Activated CD8-positive, alpha-beta T cell treated with anti-CD3 and anti-CD28 coated beads, Interleukin-2, amount 10 ng/mL, durations not matched to agents 7 days and 5 days (primary cell): ENCODE measurements at regions of chr15 and their contacts with region 1.

Region 1: DNA sequence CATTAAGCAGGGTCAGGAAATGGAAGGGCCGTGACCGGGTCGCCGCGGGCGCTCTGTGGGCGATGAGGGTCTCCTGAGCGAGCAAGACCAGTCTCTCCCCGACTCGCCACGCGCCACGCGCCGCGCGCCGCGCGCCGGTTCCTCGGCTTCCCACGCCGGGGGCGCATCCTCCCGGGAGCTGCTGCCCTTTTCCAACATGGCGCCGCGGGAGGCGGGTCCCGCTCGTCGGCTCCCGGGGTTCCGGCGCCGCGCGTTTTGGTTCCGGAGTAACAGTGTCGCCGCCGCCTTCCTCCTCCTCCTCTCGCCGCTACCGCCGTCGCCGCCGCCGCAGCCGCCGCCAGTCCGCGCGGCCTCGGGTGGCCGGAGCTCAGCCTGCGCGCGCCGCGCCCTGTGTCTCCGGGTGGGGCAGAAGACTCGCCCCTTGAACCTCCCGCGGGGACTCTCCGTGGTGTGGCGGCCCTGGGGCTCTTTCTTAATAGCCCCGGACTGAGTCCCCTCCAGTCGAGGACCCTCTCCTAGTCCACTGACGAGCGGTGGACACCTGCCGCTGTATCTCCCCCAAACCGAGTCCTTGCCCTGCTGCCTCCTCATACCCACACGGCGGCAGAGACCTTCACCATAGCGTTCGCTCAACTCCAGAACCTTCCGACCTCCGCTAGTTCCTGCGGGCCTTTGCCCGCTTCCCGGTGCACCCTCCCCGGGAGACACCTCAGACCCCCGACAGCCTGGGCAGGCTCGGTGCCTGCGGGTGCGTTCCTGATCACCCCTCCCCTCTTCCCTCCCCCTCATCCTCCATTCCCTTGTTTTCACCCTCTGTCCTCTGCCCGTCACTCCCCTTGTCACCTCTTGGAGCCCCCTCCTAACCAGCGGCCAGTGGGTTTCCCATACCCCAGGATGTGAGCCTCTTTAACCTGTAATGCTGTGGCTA is at the start of gene MAP2K5:
- DNase-seq: peak; percentile 84
- ATAC-seq: peak; percentile 84
- H3K4me3 Mint-ChIP-seq: peak within 1 kb of the TSS; percentile 94
- H3K27ac Mint-ChIP-seq: peak within 1 kb of the TSS; percentile 98
- H3K4me1 Mint-ChIP-seq: peaks cover 55% of the 10 kb centered on the region
- H3K27me3 Mint-ChIP-seq: no peaks in the 10 kb centered on the region
- total RNA-seq, gene MAP2K5: 18.3 to 20.9 TPM

Region 2: DNA sequence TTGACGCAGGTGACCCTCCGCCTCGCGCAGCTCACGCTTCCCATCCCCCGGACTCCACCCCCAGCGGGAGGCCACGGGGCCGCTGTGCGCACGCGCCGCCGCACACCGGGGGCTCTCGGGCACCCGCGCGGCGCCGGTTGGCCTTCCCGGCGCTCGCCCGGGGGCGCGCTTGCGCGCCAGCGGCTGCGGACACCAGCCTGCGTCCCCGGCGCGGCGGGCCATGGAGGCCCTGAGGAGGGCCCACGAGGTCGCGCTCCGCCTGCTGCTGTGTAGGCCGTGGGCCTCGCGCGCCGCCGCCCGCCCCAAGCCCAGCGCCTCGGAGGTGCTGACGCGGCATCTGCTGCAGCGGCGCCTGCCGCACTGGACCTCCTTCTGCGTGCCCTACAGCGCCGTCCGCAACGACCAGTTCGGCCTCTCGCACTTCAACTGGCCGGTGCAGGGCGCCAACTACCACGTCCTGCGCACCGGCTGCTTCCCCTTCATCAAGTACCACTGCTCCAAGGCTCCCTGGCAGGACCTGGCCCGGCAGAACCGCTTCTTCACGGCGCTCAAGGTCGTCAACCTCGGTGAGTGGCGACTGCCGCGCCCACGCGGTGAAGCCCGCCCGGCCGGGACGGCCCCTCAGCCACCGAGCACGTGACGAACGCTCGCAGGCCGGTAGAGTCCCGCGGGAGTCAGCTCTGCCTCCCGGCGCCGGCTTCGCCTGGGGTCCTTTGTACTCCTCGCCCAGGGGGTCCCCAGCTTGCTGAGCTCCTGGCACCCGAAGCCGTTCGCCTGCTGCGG is 21.5 kb before region 1 on chr15 and contains the start of gene C15orf61:
- CTCF ChIA-PET with region 1: interaction called, 4 read pairs
- POLR2A ChIA-PET with region 1: interaction called, 11 read pairs
- DNase-seq: peak; percentile 87
- ATAC-seq: peak; percentile 88
- H3K4me3 Mint-ChIP-seq: peak within 1 kb of the TSS; percentile 87
- H3K27ac Mint-ChIP-seq: peak within 1 kb of the TSS; percentile 94
- H3K4me1 Mint-ChIP-seq: peaks cover 24% of the 10 kb centered on the region
- H3K27me3 Mint-ChIP-seq: no peaks in the 10 kb centered on the region
- total RNA-seq, gene C15orf61: 5.4 to 5.7 TPM